ENCODE measurements at regions of chr1 and their contacts with region 1.

Region 1: GRCh38 chr1:1399187-1399871 is at the start of gene CCNL2:
- DNase-seq: peak; percentile 99 to 100 (median 99)
- ATAC-seq: peak; percentile 95
- H3K4me3 ChIP-seq: peak within 1 kb of the TSS; percentile 92 to 96
- H3K4me3 Mint-ChIP-seq: peak within 1 kb of the TSS; percentile 89
- H3K27ac ChIP-seq: peak within 1 kb of the TSS; percentile 81 to 92
- H3K27ac Mint-ChIP-seq: peak within 1 kb of the TSS; percentile 89
- H3K4me1 ChIP-seq: peaks cover 30% of the 10 kb centered on the region
- H3K4me1 Mint-ChIP-seq: peaks cover 45% of the 10 kb centered on the region
- H3K27me3 ChIP-seq: no peaks in the 10 kb centered on the region
- H3K27me3 Mint-ChIP-seq: no peaks in the 10 kb centered on the region
- CTCF ChIP-seq: peak; percentile 55
- total RNA-seq, gene CCNL2: 307 to 328 TPM

Region 2: GRCh38 chr1:1109743-1110142 is 289.6 kb before region 1 on chr1:
- CTCF ChIA-PET with region 1: no interaction called
- POLR2A ChIA-PET with region 1: no interaction called
- intact Hi-C with region 1: no loop called
- DNase-seq: no peak
- ATAC-seq: no peak
- H3K4me3 ChIP-seq: no peak overlapping the region
- H3K4me3 Mint-ChIP-seq: no peak overlapping the region
- H3K27ac ChIP-seq: no peak overlapping the region
- H3K27ac Mint-ChIP-seq: no peak overlapping the region
- H3K4me1 ChIP-seq: peaks cover 6% of the 10 kb centered on the region
- H3K4me1 Mint-ChIP-seq: peaks cover 19% of the 10 kb centered on the region
- H3K27me3 ChIP-seq: no peaks in the 10 kb centered on the region
- H3K27me3 Mint-ChIP-seq: no peaks in the 10 kb centered on the region
- CTCF ChIP-seq: no peak

Region 3: DNA sequence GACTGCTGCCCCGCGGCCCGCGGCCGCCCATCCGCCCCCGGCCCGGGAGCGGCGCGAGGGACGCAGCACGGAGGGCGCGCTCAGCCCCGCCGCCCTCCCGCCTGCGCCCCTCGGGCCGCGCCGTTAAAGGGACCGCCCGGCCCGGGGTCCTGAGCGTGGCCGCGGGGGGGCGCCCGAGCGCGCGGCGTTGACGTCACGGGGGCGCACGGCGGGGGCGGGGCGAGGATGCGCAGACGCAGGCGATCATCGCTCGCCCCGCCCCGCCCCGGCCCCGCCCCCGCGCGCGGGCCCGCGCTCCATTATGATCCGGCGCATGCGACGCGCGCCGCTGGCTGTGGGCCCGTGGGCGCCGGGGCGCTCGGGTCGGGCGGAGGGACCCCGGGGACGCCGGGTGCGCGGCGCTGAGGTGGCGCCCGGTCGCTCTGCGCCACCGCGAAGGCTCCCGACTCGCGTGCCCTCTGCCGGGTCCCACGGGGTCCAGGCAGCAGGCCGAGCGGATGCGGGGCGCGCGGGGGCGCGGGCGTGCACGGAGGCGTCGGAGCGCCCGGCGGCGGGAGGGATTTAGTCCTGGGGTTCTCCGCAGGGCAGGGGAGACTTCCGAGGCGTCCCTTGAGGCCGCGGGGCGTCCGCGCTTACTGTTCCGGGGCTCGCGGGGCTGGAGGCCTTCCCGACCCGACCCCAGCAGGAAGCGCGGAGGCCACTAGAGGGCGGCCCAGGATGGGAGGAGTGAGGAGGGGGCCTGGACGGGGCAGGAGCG is 49.9 kb before region 1 on chr1 and contains the start of gene DVL1:
- CTCF ChIA-PET with region 1: no interaction called
- POLR2A ChIA-PET with region 1: interaction called, 7 read pairs
- intact Hi-C with region 1: loop called (anchors 2 kb)
- DNase-seq: peak; percentile 50 to 86 (median 72)
- ATAC-seq: peak; percentile 84
- H3K4me3 ChIP-seq: peak within 1 kb of the TSS; percentile 57 to 63
- H3K4me3 Mint-ChIP-seq: peak within 1 kb of the TSS; percentile 76
- H3K27ac ChIP-seq: peak within 1 kb of the TSS; percentile 46 to 72
- H3K27ac Mint-ChIP-seq: peak within 1 kb of the TSS; percentile 41
- H3K4me1 ChIP-seq: peaks cover 27% of the 10 kb centered on the region
- H3K4me1 Mint-ChIP-seq: peaks cover 29% of the 10 kb centered on the region
- H3K27me3 ChIP-seq: peaks cover 0 to 16% of the 10 kb centered on the region in 2 experiments
- H3K27me3 Mint-ChIP-seq: peaks cover 8% of the 10 kb centered on the region
- CTCF ChIP-seq: peak; percentile 43
- total RNA-seq, gene DVL1: 44.5 to 45.5 TPM

Region 4: GRCh38 chr1:1441002-1441888 is 41.9 kb after region 1 on chr1:
- CTCF ChIA-PET with region 1: interaction called, 3 read pairs
- POLR2A ChIA-PET with region 1: no interaction called
- intact Hi-C with region 1: loop called in 1 of 2 experiments (anchors 1 kb)
- DNase-seq: peak; percentile 22 to 74 (median 59)
- ATAC-seq: peak; percentile 94
- H3K4me3 ChIP-seq: no peak overlapping the region
- H3K4me3 Mint-ChIP-seq: no peak overlapping the region
- H3K27ac ChIP-seq: no peak overlapping the region
- H3K27ac Mint-ChIP-seq: no peak overlapping the region
- H3K4me1 ChIP-seq: peaks cover 9% of the 10 kb centered on the region
- H3K4me1 Mint-ChIP-seq: peaks cover 5% of the 10 kb centered on the region
- H3K27me3 ChIP-seq: peaks cover 12 to 16% of the 10 kb centered on the region in 2 experiments
- H3K27me3 Mint-ChIP-seq: peaks cover 10% of the 10 kb centered on the region
- CTCF ChIP-seq: peak; percentile 85

Region 5: GRCh38 chr1:1471389-1472052 is 72.2 kb after region 1 on chr1 and contains the start of gene ATAD3B:
- CTCF ChIA-PET with region 1: no interaction called
- POLR2A ChIA-PET with region 1: no interaction called
- intact Hi-C with region 1: loop called (anchors 1 to 2 kb)
- DNase-seq: peak; percentile 75 to 95 (median 90)
- ATAC-seq: peak; percentile 93
- H3K4me3 ChIP-seq: peak within 1 kb of the TSS; percentile 62 to 86
- H3K4me3 Mint-ChIP-seq: peak within 1 kb of the TSS; percentile 92
- H3K27ac ChIP-seq: peak within 1 kb of the TSS; percentile 81 to 89
- H3K27ac Mint-ChIP-seq: peak within 1 kb of the TSS; percentile 94
- H3K4me1 ChIP-seq: peaks cover 24% of the 10 kb centered on the region
- H3K4me1 Mint-ChIP-seq: peaks cover 24% of the 10 kb centered on the region
- H3K27me3 ChIP-seq: no peaks in the 10 kb centered on the region
- H3K27me3 Mint-ChIP-seq: no peaks in the 10 kb centered on the region
- CTCF ChIP-seq: no peak
- total RNA-seq, gene ATAD3B: 55.4 to 69.6 TPM

Region 6: DNA sequence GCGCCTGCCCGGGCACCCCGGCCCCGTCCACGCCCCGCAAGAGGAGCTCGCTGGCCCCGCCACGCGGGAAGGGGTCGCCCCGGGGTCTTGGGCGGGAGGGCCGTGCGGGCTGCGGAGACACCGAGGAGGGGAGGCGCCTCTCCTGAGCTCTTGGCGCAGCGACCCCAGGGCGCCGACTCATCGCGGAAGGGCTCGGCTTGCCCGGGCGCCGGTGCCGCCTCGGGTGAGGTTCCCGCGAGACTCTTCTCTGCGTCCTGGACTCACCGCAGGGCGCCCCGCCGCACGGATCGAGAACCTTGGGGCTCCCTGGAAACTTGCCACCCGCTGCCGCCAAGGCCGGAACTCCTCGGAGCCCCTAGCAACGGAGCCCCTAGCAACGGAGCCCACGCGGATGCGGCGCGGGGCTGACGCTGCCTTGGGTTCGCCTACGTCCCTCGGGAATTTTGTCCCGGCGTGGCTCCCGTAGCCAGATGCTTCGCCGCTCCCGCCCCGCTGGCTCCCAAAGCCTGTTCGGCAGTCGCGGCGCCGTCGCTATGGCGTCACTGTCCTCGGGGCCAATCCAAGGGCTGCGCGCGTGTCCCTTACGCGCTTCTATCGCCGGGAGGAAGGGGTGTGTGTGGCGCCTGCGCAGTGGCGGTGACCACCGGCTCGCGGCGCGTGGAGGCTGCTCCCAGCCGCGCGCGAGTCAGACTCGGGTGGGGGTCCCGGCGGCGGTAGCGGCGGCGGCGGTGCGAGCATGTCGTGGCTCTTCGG is 112.4 kb after region 1 on chr1 and contains the start of gene ATAD3A:
- CTCF ChIA-PET with region 1: no interaction called
- POLR2A ChIA-PET with region 1: no interaction called
- intact Hi-C with region 1: loop called in 1 of 2 experiments (anchors 1 kb)
- DNase-seq: peak; percentile 83 to 98 (median 95)
- ATAC-seq: peak; percentile 94
- H3K4me3 ChIP-seq: peak within 1 kb of the TSS; percentile 81 to 99
- H3K4me3 Mint-ChIP-seq: peak within 1 kb of the TSS; percentile 88
- H3K27ac ChIP-seq: peak within 1 kb of the TSS; percentile 90 to 97
- H3K27ac Mint-ChIP-seq: peak within 1 kb of the TSS; percentile 94
- H3K4me1 ChIP-seq: peaks cover 6% of the 10 kb centered on the region
- H3K4me1 Mint-ChIP-seq: peaks cover 11% of the 10 kb centered on the region
- H3K27me3 ChIP-seq: no peaks in the 10 kb centered on the region
- H3K27me3 Mint-ChIP-seq: no peaks in the 10 kb centered on the region
- CTCF ChIP-seq: no peak
- total RNA-seq, gene ATAD3A: 27.0 to 29.6 TPM

Region 7: GRCh38 chr1:1703796-1704195 is 304.5 kb after region 1 on chr1:
- CTCF ChIA-PET with region 1: no interaction called
- POLR2A ChIA-PET with region 1: no interaction called
- intact Hi-C with region 1: no loop called
- DNase-seq: peak in 1 of 9 experiments; percentile 45
- ATAC-seq: no peak
- H3K4me3 ChIP-seq: no peak overlapping the region
- H3K4me3 Mint-ChIP-seq: no peak overlapping the region
- H3K27ac ChIP-seq: no peak overlapping the region
- H3K27ac Mint-ChIP-seq: no peak overlapping the region
- H3K4me1 ChIP-seq: no peaks in the 10 kb centered on the region
- H3K4me1 Mint-ChIP-seq: no peaks in the 10 kb centered on the region
- H3K27me3 ChIP-seq: no peaks in the 10 kb centered on the region
- H3K27me3 Mint-ChIP-seq: no peaks in the 10 kb centered on the region
- CTCF ChIP-seq: no peak

Measured in CD8-positive, alpha-beta T cell (primary cell).